A673 (cell line): ENCODE measurements at regions of chr13 and their contacts with region 1.

Region 1: GRCh38 chr13:51070005-51070649 is 40.9 kb downstream of the C13orf42 start:
- DNase-seq: peak; percentile 85
- H3K4me3 ChIP-seq: no peak overlapping the region
- H3K27ac ChIP-seq: no peak overlapping the region
- H3K4me1 ChIP-seq: no peaks in the 10 kb centered on the region
- H3K27me3 ChIP-seq: no peaks in the 10 kb centered on the region
- CTCF ChIP-seq: peak; percentile 91

Region 2: DNA sequence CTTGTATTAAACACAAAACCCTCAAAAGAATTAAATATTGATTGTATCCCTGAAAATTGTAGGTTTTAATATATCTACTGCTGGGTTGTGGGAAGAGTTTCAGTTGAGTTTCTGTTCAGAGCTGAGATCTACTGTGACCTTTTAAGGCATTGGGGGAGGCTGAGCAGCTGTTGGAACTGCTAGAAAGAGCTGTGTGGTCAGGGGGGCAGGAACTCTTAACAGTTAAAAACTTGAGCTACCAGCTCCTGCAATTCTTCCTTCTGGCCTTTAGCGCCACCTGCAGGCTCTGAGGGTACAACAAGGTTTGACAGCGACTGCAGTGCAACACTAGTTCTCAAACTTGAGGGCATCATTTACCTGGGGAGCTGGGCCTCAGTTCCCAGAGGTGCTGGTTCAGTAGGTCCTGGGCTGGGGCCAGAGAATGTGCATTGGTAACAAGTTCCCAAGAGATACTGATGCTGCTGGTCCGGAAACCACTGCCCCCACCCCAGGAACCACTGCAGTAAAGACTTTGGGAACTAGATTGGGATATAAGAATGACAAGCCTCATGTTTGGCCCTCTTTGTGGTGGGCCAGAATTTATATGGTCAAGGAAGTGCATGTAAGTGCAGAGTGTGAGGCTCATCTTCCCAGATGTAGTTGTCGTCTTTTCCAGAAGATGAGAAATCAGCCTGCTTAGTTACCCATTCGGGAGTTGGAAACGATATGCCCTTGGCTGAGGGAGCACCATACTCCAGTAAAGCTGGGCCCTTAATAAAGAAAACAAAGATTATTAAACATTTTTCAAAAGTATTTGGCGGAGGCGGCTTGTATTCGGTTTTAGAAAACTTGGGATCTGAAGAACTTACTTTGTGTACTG is 158.0 kb before region 1 on chr13:
- CTCF ChIA-PET with region 1: no interaction called
- POLR2A ChIA-PET with region 1: no interaction called
- intact Hi-C with region 1: loop called (anchors 5 kb)
- DNase-seq: peak; percentile 89
- H3K4me3 ChIP-seq: peak overlapping the region; percentile 70
- H3K27ac ChIP-seq: no peak overlapping the region
- H3K4me1 ChIP-seq: peaks cover 18% of the 10 kb centered on the region
- H3K27me3 ChIP-seq: no peaks in the 10 kb centered on the region
- CTCF ChIP-seq: peak; percentile 92

Region 3: GRCh38 chr13:50969691-50970090 is 100.4 kb before region 1 on chr13:
- CTCF ChIA-PET with region 1: no interaction called
- POLR2A ChIA-PET with region 1: no interaction called
- intact Hi-C with region 1: loop called (anchors 5 kb)
- DNase-seq: peak; percentile 34
- H3K4me3 ChIP-seq: no peak overlapping the region
- H3K27ac ChIP-seq: no peak overlapping the region
- H3K4me1 ChIP-seq: no peaks in the 10 kb centered on the region
- H3K27me3 ChIP-seq: no peaks in the 10 kb centered on the region
- CTCF ChIP-seq: peak; percentile 36; the same call in 1 of the 2 replicates

Region 4: GRCh38 chr13:51148223-51148951 is 78.3 kb after region 1 on chr13:
- CTCF ChIA-PET with region 1: no interaction called
- POLR2A ChIA-PET with region 1: no interaction called
- intact Hi-C with region 1: no loop called
- DNase-seq: peak; percentile 97
- H3K4me3 ChIP-seq: peak overlapping the region; percentile 17
- H3K27ac ChIP-seq: peak overlapping the region; percentile 91
- H3K4me1 ChIP-seq: peaks cover 20% of the 10 kb centered on the region
- H3K27me3 ChIP-seq: no peaks in the 10 kb centered on the region
- CTCF ChIP-seq: no peak

Region 5: DNA sequence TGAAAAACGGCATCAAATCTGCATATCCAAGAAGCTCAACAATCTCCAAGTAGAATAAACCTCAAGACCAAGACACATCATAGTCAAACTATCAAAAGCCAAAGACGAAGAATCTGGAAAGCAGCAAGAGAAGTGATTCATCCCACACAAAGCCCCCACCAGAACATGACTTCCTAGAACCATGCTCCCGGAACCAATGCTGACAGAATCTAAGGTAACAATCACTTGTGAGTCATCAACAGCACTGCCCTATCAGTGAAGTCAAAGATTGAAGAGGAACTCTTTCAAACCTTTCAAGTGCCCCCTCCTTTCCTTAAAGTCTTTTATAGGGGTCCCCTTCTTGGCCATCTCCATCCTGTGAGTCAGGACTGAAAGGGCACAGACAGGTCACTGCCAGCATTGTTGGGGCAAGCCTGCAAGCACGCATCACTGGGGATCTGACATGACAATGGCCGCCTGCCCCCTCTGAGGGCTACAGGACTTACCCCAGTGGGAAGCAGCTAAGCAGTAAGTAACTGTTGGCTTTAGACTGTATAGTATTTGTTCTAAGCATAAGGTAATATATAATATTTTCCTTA is 791.7 kb after region 1 on chr13 and contains the start of gene CCDC70:
- CTCF ChIA-PET with region 1: no interaction called
- POLR2A ChIA-PET with region 1: no interaction called
- intact Hi-C with region 1: no loop called
- DNase-seq: no peak
- H3K4me3 ChIP-seq: no peak within 1 kb of the TSS
- H3K27ac ChIP-seq: no peak within 1 kb of the TSS
- H3K4me1 ChIP-seq: no peaks in the 10 kb centered on the region
- H3K27me3 ChIP-seq: peaks cover 4% of the 10 kb centered on the region
- CTCF ChIP-seq: no peak
- total RNA-seq, gene CCDC70: not detected in 2 replicates